ENCODE measurements at regions of chr19 and their contacts with region 1.

Region 1: GRCh38 chr19:48513289-48514122 is 1.9 kb upstream of the LMTK3 start:
- DNase-seq: peak; percentile 78
- H3K4me3 Mint-ChIP-seq: no peak overlapping the region
- H3K27ac Mint-ChIP-seq: peak overlapping the region; percentile 53
- H3K4me1 Mint-ChIP-seq: peaks cover 19% of the 10 kb centered on the region
- H3K27me3 Mint-ChIP-seq: no peaks in the 10 kb centered on the region

Region 2: GRCh38 chr19:48501496-48502350 is 11.8 kb before region 1 on chr19:
- CTCF ChIA-PET with region 1: interaction called, 6 read pairs
- POLR2A ChIA-PET with region 1: interaction called, 10 read pairs
- DNase-seq: peak; percentile 73
- H3K4me3 Mint-ChIP-seq: peak overlapping the region; percentile 57
- H3K27ac Mint-ChIP-seq: no peak overlapping the region
- H3K4me1 Mint-ChIP-seq: peaks cover 21% of the 10 kb centered on the region
- H3K27me3 Mint-ChIP-seq: peaks cover 17% of the 10 kb centered on the region